ENCODE measurements at regions of chr6 and their contacts with region 1.

Region 1: GRCh38 chr6:161418463-161418945 is 144.6 kb upstream of the AGPAT4 start:
- DNase-seq: no peak

Region 2: DNA sequence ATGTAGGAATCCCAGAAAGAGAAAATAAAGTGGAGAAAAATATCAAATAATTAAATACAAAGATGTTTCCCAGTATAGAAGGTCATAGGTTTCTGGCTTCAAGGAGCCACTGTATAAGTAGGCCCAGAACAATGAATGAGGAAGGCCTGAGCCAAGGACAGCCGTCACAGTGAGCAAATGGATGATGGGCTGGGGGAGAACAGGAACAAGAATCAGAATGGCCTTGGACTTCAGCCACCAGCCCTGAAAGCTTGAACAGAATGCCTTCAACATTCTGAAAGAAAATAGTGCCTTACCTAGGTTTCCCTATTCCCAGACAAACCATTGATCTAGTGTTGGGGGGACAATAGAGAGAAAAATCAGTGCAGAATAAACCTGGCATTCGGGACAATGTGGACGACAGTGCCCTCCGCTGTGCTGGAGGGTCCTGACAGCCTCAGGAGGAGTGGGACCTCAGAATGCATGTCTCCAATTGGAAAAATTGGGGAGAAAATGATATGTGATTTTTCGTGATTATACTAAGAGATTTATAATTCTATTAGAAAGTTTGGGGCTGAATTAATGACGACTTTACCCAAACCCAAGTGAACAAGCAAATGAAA is 189.3 kb after region 1 on chr6:
- intact Hi-C with region 1: loop called in 1 of 2 experiments (anchors 10 kb)
- DNase-seq: no peak

Region 3: GRCh38 chr6:161694995-161695394 is 276.5 kb after region 1 on chr6:
- intact Hi-C with region 1: loop called in 1 of 2 experiments (anchors 10 kb)
- DNase-seq: no peak

Measured in posterior vena cava (tissue), 2 donors.